ENCODE measurements at regions of chr17 and their contacts with region 1.

Region 1: GRCh38 chr17:49556223-49556971 is 19.3 kb upstream of the NXPH3 start:
- DNase-seq: peak; percentile 92
- CTCF ChIP-seq: peak; percentile 95

Region 2: DNA sequence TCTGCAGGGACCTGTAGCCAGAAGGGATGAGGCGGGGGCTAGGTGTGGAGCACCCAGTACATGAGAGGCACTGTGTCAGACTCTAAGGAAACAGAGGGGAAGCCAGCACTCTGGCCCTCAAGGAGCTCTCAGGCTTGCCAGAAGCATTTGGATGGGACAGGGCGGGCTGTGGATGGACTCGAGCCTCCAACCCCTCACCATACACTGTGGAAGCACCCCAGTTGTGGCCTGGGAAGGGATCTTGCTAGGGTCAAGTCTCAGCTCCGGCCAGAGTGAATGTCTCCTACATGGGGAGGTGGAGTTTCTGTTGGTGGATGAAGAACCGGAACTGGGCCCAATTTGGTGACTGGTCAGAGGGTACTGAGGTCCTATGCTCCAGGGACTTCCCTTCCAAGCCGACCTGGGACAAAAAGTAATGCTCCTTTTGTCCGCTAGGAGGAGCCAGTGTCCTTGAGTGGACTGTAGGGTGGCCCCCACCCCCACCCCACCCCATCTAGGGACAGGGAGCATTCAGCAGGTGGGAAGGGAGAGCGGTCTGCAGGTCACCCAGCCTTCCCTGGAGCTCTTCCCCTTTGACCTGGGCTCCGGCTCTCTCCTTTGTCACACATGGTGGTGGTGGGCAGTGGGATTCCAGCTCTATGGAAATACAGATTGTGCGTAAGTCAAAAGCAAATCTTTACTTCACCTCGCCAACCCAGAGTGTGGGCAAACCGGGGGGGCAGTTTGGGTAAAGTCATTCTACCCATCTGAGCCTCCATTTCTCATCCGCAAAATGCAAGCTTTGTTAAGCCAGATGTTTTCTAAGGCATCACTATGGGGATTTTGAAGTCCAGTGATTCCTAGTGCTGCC is 121.4 kb before region 1 on chr17:
- CTCF ChIA-PET with region 1: interaction called, 73 read pairs
- POLR2A ChIA-PET with region 1: no interaction called
- DNase-seq: peak; percentile 79
- CTCF ChIP-seq: peak; percentile 57

Region 3: GRCh38 chr17:49523706-49524472 is 32.5 kb before region 1 on chr17:
- CTCF ChIA-PET with region 1: interaction called, 39 read pairs
- POLR2A ChIA-PET with region 1: no interaction called
- DNase-seq: no peak
- CTCF ChIP-seq: no peak

Region 4: DNA sequence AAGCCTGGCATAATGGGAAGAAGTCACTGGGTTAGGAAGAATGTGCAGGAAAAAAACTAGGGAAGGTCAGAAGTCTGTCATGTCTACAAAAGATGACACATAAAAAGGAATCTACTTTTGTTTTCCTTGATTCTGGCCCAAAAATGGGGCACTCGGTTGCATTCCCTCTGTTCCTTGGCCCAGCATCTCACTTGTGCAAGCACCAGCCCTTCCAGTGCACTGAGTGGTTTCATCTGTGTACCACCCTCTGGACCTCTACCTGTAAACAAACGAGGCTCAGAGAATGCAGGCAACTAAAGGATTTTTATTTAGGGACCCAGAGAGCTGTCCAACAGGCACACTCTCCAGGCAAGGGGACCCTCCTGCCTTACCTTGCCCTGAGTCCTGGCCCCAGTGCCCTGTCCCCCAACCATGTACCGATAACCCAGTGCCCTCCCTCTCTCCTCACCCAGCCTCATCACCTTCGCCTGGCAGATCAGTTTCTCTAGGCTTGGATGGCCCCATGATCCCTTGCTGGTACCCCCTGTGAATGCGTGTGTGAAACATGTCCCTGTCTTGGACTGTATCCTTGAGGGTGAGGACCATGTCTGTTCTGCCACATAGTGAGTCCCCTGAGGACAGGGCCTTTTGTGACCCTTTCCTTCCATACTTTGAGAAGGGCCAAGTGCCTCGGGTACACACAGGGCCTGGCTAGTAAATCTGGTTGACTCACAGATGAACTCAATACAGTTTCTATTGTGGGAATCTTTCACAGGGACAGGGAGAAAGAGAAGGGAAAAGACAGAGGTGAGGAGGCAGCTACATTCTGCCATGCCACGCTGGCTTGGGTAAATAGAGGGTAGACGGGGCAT is 32.6 kb after region 1 on chr17:
- CTCF ChIA-PET with region 1: no interaction called
- POLR2A ChIA-PET with region 1: no interaction called
- DNase-seq: no peak
- CTCF ChIP-seq: no peak

Region 5: GRCh38 chr17:49677933-49678847 is 121.8 kb after region 1 on chr17 and contains the start of gene SPOP:
- CTCF ChIA-PET with region 1: interaction called, 17 read pairs
- POLR2A ChIA-PET with region 1: no interaction called
- DNase-seq: peak; percentile 98
- CTCF ChIP-seq: no peak

Region 6: GRCh38 chr17:49715717-49716279 is 159.4 kb after region 1 on chr17:
- CTCF ChIA-PET with region 1: interaction called, 10 read pairs
- POLR2A ChIA-PET with region 1: no interaction called
- DNase-seq: no peak
- CTCF ChIP-seq: no peak